ENCODE measurements at regions of chr12 and their contacts with region 1.

Region 1: DNA sequence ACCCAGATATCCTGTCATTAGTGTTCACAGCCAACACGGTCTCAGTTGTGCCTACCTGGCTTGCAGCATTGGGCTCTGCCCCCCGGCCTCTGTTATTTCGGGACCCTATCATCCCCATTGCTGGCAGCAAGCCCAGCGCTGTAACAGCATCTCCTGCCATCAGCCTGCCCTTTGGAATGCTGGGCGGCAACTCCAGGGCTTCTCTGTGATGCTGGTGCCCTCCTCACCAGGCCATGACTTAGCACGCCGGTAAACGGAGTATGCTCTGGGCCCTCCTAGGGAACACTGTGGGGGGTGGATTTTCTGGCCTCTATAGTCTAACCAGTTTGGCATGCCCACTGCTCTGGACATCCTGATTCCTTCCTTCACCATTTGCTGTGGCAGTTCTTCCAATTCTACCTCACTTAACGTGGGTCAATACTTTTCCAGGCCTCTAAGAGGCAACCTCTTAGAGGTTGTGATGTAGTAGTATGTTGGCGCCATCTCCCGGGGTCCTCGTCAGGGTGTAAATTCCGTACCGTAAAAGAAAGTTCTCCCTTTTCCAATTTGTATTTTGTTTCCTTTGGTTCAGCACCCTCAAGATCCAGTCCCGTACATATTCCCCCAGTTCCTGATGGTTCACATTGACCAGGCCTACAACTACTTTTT is 80.0 kb downstream of the SINHCAF start:
- DNase-seq: no peak
- ATAC-seq: peak; percentile 60
- H3K4me3 ChIP-seq: no peak overlapping the region
- H3K27ac ChIP-seq: no peak overlapping the region
- H3K4me1 ChIP-seq: no peaks in the 10 kb centered on the region
- H3K27me3 ChIP-seq: no peaks in the 10 kb centered on the region
- CTCF ChIP-seq: peak in 2 of 3 experiments; percentile 22 to 32; a peak in 3 of 6 replicates
- EP300 ChIP-seq: no peak
- POLR2A ChIP-seq: no peak
- RAD21 ChIP-seq: no peak

Region 2: GRCh38 chr12:31260840-31261239 is 14.9 kb after region 1 on chr12:
- CTCF ChIA-PET with region 1: interaction called, 5 read pairs
- POLR2A ChIA-PET with region 1: no interaction called
- RAD21 ChIA-PET with region 1: no interaction called
- SMC1A ChIA-PET with region 1: interaction called, 10 read pairs
- in situ Hi-C with region 1: no loop called
- intact Hi-C with region 1: no loop called
- DNase-seq: no peak
- ATAC-seq: no peak
- H3K4me3 ChIP-seq: no peak overlapping the region
- H3K27ac ChIP-seq: no peak overlapping the region
- H3K4me1 ChIP-seq: no peaks in the 10 kb centered on the region
- H3K27me3 ChIP-seq: no peaks in the 10 kb centered on the region
- CTCF ChIP-seq: no peak
- EP300 ChIP-seq: no peak
- POLR2A ChIP-seq: no peak
- RAD21 ChIP-seq: no peak

Region 3: GRCh38 chr12:31362759-31363415 is 116.9 kb after region 1 on chr12:
- CTCF ChIA-PET with region 1: interaction called, 18 read pairs
- POLR2A ChIA-PET with region 1: no interaction called
- RAD21 ChIA-PET with region 1: interaction called, 10 read pairs
- SMC1A ChIA-PET with region 1: interaction called, 15 read pairs
- in situ Hi-C with region 1: no loop called
- intact Hi-C with region 1: no loop called
- DNase-seq: peak; percentile 46
- ATAC-seq: peak; percentile 82
- H3K4me3 ChIP-seq: no peak overlapping the region
- H3K27ac ChIP-seq: peak overlapping the region; percentile 45
- H3K4me1 ChIP-seq: peaks cover 22% of the 10 kb centered on the region
- H3K27me3 ChIP-seq: no peaks in the 10 kb centered on the region
- CTCF ChIP-seq: peak; percentile 24 to 63 (median 27); a peak in 4 of 6 replicates
- EP300 ChIP-seq: 0 out of 4 replicates have a peak, but pooled peaks of 1 of the 2 experiments have one; percentile 11
- POLR2A ChIP-seq: peak; percentile 60; the same call in 1 of the 2 replicates
- RAD21 ChIP-seq: peak; percentile 49

Region 4: GRCh38 chr12:31629756-31630732 is 384.1 kb after region 1 on chr12:
- CTCF ChIA-PET with region 1: no interaction called
- POLR2A ChIA-PET with region 1: no interaction called
- RAD21 ChIA-PET with region 1: no interaction called
- SMC1A ChIA-PET with region 1: interaction called, 4 read pairs
- in situ Hi-C with region 1: no loop called
- intact Hi-C with region 1: loop called (anchors 5 kb)
- DNase-seq: no peak
- ATAC-seq: no peak
- H3K4me3 ChIP-seq: no peak overlapping the region
- H3K27ac ChIP-seq: no peak overlapping the region
- H3K4me1 ChIP-seq: peaks cover 8% of the 10 kb centered on the region; the same call in 1 of the 2 replicates
- H3K27me3 ChIP-seq: no peaks in the 10 kb centered on the region
- CTCF ChIP-seq: no peak
- EP300 ChIP-seq: no peak
- POLR2A ChIP-seq: no peak
- RAD21 ChIP-seq: no peak

Measured in GM12878 (cell line).